Dendritic cell treated with granulocyte-macrophage colony-stimulating factor and Interleukin-4, amounts not matched to agents 40 ng/mL and 50 ng/mL, for 4 days (primary cell): ENCODE measurements at regions of chr3 and their contacts with region 1.

Region 1: GRCh38 chr3:108489771-108490170 is 20.6 kb downstream of the MYH15 start:
- H3K4me3 Mint-ChIP-seq: no peak overlapping the region
- H3K27ac Mint-ChIP-seq: no peak overlapping the region
- H3K4me1 Mint-ChIP-seq: no peaks in the 10 kb centered on the region
- H3K27me3 Mint-ChIP-seq: no peaks in the 10 kb centered on the region

Region 2: GRCh38 chr3:108283006-108283405 is 206.8 kb before region 1 on chr3:
- intact Hi-C with region 1: no loop called
- H3K4me3 Mint-ChIP-seq: no peak overlapping the region
- H3K27ac Mint-ChIP-seq: no peak overlapping the region
- H3K4me1 Mint-ChIP-seq: no peaks in the 10 kb centered on the region
- H3K27me3 Mint-ChIP-seq: no peaks in the 10 kb centered on the region

Region 3: GRCh38 chr3:108388136-108389132 is 101.3 kb before region 1 on chr3:
- intact Hi-C with region 1: no loop called
- H3K4me3 Mint-ChIP-seq: no peak overlapping the region
- H3K27ac Mint-ChIP-seq: no peak overlapping the region
- H3K4me1 Mint-ChIP-seq: peaks cover 18% of the 10 kb centered on the region
- H3K27me3 Mint-ChIP-seq: peaks cover 4% of the 10 kb centered on the region

Region 4: GRCh38 chr3:108437440-108437839 is 52.3 kb before region 1 on chr3:
- intact Hi-C with region 1: no loop called
- H3K4me3 Mint-ChIP-seq: no peak overlapping the region
- H3K27ac Mint-ChIP-seq: no peak overlapping the region
- H3K4me1 Mint-ChIP-seq: no peaks in the 10 kb centered on the region
- H3K27me3 Mint-ChIP-seq: no peaks in the 10 kb centered on the region

Region 5: DNA sequence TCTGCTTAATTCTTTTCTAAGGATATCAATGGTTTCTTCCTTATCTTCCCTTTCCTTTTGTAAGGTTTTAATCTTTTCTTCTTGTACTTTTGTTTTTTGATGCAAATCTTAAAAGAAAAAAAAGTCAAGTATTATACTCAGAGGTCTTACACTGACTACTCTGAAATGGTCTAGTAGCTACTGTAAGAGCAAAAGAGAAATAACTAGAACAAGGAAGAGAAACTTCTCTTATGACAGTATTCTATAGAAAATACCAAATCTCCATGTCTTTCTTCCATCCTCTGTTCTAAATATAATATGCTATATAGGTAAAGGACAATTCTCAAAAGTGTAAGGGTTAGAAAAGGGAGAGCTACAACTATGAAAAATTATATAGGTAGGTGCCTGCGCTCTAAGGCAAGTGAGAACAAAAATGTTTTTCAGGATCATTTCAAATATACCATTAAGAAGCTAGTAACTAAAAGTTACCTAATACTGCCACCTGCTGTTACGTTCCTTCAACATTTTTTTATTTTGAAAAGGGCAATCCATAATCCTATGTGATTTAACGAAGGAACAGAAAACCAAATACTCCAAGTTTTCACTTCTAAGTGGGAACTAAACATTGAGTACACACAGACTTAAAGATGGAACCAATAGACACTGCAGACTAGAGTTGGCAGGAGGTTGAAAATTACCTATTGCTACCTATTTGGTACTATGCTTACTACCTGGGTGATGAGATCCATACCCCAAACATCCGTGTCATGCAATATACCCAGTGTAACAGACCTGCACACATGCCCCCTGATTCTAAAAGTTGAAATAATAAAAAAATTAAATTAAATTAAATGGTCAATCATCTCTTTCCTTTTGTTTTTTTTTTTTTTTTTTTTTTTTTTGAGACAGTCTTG is 62.7 kb after region 1 on chr3:
- intact Hi-C with region 1: loop called (anchors 1 kb)
- H3K4me3 Mint-ChIP-seq: no peak overlapping the region
- H3K27ac Mint-ChIP-seq: peak overlapping the region; percentile 69
- H3K4me1 Mint-ChIP-seq: peaks cover 13% of the 10 kb centered on the region
- H3K27me3 Mint-ChIP-seq: no peaks in the 10 kb centered on the region

Region 6: GRCh38 chr3:108662130-108662738 is 172.5 kb after region 1 on chr3:
- intact Hi-C with region 1: loop called (anchors 10 kb)
- H3K4me3 Mint-ChIP-seq: no peak overlapping the region
- H3K27ac Mint-ChIP-seq: no peak overlapping the region
- H3K4me1 Mint-ChIP-seq: no peaks in the 10 kb centered on the region
- H3K27me3 Mint-ChIP-seq: no peaks in the 10 kb centered on the region

Region 7: GRCh38 chr3:108914774-108915641 is 425.2 kb after region 1 on chr3:
- intact Hi-C with region 1: loop called (anchors 2 kb)
- H3K4me3 Mint-ChIP-seq: no peak overlapping the region
- H3K27ac Mint-ChIP-seq: no peak overlapping the region
- H3K4me1 Mint-ChIP-seq: no peaks in the 10 kb centered on the region
- H3K27me3 Mint-ChIP-seq: no peaks in the 10 kb centered on the region